H1 (cell line): ENCODE measurements at regions of chr9 and their contacts with region 1.

Region 1: GRCh38 chr9:124392871-124393460 is 22.3 kb downstream of the PSMB7 start:
- DNase-seq: no peak
- H3K4me3 ChIP-seq: no peak overlapping the region
- H3K27ac ChIP-seq: no peak overlapping the region
- H3K4me1 ChIP-seq: peaks cover 3 to 16% (median 9%) of the 10 kb centered on the region in 4 experiments; a peak in 5 of 7 replicates
- H3K27me3 ChIP-seq: no peaks in the 10 kb centered on the region
- CTCF ChIP-seq: peak; percentile 39 to 55 (median 43); a peak in 3 of 4 replicates
- EP300 ChIP-seq: no peak
- POLR2A ChIP-seq: no peak
- RAD21 ChIP-seq: peak; percentile 44 to 63; a peak in 3 of 4 replicates

Region 2: DNA sequence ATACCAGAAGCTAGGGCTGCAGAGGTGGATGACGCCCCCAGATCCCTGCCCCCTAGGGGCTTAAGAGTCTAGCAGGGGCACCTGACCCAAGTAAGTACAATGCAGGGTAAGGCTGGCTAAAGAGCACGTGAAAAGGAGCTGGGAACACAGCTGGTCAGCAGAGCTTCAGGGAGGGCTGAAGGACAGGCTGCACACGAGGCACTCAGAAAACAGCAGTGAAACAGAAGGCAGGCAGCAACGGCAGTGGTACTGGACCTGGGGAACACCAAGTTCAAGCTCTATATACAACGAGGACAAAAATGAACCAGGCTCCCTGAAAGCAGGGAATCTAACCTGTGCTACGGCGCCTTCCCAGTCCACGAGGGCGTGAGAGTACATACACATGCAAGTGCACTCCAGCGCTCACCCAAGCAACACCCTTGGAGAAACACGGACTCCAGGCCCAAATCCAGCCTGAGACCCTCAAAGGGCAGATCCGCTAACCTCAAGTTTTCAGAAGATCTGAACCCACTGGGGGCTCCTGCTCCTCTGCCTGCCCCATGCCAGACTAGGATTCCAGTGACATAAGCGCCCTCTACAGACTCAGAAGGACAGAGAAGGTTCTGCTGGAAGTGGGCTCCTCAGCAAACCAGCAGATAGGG is 35.1 kb before region 1 on chr9:
- CTCF ChIA-PET with region 1: interaction called, 15 read pairs
- POLR2A ChIA-PET with region 1: no interaction called
- DNase-seq: no peak
- H3K4me3 ChIP-seq: no peak overlapping the region
- H3K27ac ChIP-seq: no peak overlapping the region
- H3K4me1 ChIP-seq: no peaks in the 10 kb centered on the region
- H3K27me3 ChIP-seq: no peaks in the 10 kb centered on the region
- CTCF ChIP-seq: peak; percentile 38 to 54 (median 53)
- EP300 ChIP-seq: no peak
- POLR2A ChIP-seq: no peak
- RAD21 ChIP-seq: peak; percentile 49 to 65

Region 3: GRCh38 chr9:124366476-124367171 is 26.3 kb before region 1 on chr9:
- CTCF ChIA-PET with region 1: interaction called, 15 read pairs
- POLR2A ChIA-PET with region 1: interaction called, 4 read pairs
- DNase-seq: no peak
- H3K4me3 ChIP-seq: no peak overlapping the region
- H3K27ac ChIP-seq: no peak overlapping the region
- H3K4me1 ChIP-seq: peaks cover 0 to 4% (median 0%) of the 10 kb centered on the region in 4 experiments; a peak in 1 of 7 replicates
- H3K27me3 ChIP-seq: no peaks in the 10 kb centered on the region
- CTCF ChIP-seq: no peak
- EP300 ChIP-seq: no peak
- POLR2A ChIP-seq: no peak
- RAD21 ChIP-seq: no peak

Region 4: DNA sequence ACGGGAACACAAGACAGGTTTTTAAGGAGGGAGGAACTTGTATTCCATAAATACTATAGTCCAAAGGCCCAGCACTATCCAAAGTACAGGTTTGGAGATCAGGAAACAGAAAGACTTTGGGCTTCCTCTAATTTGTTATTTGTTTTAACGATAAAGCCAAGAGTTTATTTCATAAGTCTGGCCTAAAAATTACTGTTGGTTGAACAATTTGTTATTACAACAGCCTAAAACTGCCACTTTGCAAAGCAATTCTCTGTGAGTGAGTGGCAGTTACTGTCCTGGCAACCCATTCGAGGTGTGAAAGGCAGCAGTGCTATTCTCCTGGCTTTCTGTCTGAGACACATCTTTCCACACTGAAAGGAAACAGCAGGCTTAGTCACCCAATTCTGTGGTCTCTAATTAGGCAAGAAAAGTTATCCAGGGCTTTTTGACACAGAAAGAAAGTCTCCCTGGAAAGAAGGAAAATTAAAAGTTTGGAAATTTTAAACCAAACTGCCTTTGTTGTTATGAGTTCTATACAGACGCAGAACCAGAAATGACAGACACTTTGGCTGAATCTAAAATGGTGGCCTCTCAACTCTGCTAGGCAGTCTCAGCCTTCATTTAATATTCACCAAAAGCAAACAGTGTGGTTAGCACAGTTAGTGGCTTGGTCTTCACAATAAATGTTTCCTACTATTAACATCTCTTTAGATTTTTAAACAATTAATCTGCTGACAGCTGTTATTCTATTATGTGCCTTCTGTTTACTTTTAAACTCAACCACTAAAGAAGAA is 11.6 kb before region 1 on chr9:
- CTCF ChIA-PET with region 1: interaction called, 133 read pairs
- POLR2A ChIA-PET with region 1: interaction called, 5 read pairs
- DNase-seq: no peak
- H3K4me3 ChIP-seq: no peak overlapping the region
- H3K27ac ChIP-seq: no peak overlapping the region
- H3K4me1 ChIP-seq: no peaks in the 10 kb centered on the region
- H3K27me3 ChIP-seq: no peaks in the 10 kb centered on the region
- CTCF ChIP-seq: no peak
- EP300 ChIP-seq: no peak
- POLR2A ChIP-seq: no peak
- RAD21 ChIP-seq: no peak

Region 5: DNA sequence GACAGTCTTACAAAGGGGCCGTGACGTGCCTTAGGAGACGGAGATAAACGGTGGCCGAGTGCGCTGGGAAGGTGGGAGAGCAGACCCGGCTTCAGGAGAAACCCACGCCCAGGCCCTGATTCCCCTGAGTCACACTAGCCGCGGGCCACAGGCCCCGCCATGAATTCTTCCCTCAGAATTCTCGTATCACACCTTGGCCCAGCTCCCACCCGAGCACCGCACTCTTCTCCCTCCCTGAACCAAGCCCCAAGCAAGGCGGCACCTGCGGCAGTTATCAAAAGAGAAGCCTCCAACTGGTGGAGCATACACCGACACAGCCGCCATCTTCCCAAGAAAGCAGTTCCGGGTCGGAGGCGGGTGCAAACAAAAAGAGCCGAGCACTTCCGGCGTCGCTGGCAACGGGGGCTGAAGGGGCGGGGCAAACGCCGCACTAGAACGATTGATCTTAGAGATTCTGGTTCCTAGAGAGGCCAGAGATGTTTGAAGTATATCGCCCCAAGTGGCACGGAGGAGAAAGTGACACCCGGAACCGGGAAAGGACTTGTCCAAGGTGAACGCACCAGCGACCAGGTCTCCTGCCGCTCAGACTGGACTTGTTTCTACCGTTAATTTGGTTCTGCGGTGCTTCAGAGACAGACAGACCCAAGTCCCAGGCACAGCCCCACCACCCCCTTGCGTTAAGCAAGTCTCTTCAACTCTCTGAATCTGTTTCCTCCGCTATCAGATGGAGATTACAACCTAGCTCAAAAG is 22.3 kb after region 1 on chr9 and contains the start of gene PSMB7:
- CTCF ChIA-PET with region 1: interaction called, 330 read pairs
- POLR2A ChIA-PET with region 1: interaction called, 3 read pairs
- DNase-seq: peak; percentile 93 to 99
- H3K4me3 ChIP-seq: peak within 1 kb of the TSS; percentile 70 to 97 (median 90)
- H3K27ac ChIP-seq: peak within 1 kb of the TSS; percentile 85
- H3K4me1 ChIP-seq: peaks cover 0 to 2% (median 2%) of the 10 kb centered on the region in 4 experiments; a peak in 6 of 7 replicates
- H3K27me3 ChIP-seq: no peaks in the 10 kb centered on the region
- CTCF ChIP-seq: peak; percentile 71 to 86 (median 77)
- EP300 ChIP-seq: peak in 1 of 2 experiments; percentile 88; a peak in 1 of 3 replicates
- POLR2A ChIP-seq: peak in 1 of 2 experiments; percentile 93; a peak in 2 of 3 replicates
- RAD21 ChIP-seq: no peak
- total RNA-seq, gene PSMB7: 219 and 222 TPM in 2 replicates

Region 6: DNA sequence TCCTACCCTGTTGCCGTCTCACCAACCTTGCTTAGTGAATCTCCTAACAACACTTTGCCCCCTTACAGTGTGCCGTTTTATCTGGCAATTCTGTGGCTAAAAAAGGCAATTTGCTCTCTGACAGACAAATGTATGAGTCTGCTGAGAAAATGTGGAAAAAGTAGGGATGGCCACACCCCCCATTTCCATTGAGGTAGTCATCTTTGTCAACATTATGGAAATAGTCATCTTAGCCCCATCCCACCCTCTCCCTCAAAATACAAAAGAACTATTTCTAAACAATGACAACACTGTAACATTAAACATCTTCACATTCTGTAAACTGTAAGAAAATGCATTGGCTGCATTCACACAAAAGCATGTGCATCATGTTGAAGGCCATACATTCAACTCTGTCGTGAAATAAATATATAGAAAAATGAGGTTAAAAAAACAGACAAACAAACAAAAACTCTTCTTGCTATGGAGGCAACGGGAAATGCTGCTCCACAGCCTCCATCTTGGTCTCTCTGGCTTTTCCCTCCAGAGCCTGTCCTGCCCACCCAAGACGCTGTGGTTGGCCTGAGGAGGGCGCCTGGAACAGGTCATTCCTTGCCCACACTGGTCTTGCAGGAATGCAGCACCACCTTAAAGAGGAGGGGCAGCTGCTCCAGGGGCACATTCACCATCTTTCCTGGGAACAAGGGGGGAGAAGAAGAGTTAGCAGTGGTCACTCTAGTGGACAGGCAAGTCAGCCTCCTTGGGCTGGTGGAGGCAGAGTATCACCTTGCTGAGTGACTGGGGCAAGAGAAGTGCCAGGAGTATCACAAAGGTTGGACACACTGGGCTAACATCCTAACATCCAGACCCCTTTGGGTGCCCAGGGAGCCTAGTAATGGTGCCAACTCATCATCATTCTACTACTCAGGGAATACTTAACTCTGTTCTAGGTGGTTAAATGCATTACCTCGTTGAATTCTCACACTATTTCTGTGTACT is 129.4 kb after region 1 on chr9:
- CTCF ChIA-PET with region 1: no interaction called
- POLR2A ChIA-PET with region 1: no interaction called
- DNase-seq: peak in 1 of 2 experiments; percentile 69
- H3K4me3 ChIP-seq: no peak overlapping the region
- H3K27ac ChIP-seq: no peak overlapping the region
- H3K4me1 ChIP-seq: no peaks in the 10 kb centered on the region
- H3K27me3 ChIP-seq: no peaks in the 10 kb centered on the region
- CTCF ChIP-seq: peak; percentile 23 to 61 (median 45); a peak in 3 of 4 replicates
- EP300 ChIP-seq: no peak
- POLR2A ChIP-seq: no peak
- RAD21 ChIP-seq: peak; percentile 27 to 52